Activated B cell treated with CpG ODN at 0.5 μM for 24 hours (primary cell): ENCODE measurements at regions of chr15 and their contacts with region 1.

Region 1: DNA sequence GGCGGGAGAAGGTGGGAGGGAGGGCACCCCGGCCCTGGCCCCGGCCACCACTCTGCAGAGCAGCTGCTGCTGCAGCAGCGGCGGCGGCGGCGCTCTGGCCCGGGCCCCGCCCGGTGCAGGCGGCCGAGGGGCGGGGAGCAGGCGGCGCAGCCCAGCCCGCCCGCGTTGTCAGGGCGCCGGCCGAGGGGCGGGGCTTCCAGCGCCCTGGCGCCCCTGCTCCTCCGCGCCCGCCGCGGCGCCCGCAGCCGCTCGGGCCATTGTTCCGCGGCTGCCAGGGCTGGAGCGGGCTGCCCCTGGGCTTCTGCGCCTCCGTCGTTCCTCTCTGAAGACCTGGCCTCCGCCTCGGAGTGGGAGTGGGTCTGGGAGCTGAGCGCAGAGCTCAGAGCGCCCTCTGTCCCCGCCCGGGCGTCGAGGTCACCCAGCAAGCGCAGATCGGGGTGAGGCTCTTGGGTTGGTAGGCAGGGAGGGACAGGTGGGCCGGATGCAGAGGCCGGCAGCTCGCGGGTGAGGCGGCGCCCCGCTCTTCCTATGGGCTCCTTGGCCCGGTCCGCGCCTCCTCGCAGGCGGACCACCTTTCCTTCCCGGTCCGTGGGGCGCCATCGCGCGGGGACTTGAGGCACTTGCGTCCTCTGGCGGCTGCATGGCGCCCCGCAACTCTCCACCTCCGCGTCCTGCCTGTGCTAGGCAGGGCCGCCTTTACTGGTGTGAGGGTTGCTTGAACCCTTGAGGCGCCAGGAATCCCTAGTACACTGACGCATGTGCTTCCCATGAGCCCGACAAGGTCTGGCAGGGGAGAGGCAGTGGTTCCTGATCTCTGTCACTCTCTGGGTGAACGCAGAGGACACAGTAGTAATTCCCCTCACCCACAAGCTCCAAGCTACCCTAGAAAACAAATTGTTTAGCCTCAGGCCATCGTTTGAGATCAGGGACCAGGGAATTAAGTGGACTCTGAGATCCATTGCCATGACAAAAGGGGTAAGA is at the start of gene LPCAT4:
- DNase-seq: peak; percentile 87
- ATAC-seq: peak; percentile 86
- H3K4me3 Mint-ChIP-seq: peak within 1 kb of the TSS; percentile 94
- H3K27ac Mint-ChIP-seq: peak within 1 kb of the TSS; percentile 95
- H3K4me1 Mint-ChIP-seq: peaks cover 45% of the 10 kb centered on the region
- H3K27me3 Mint-ChIP-seq: no peaks in the 10 kb centered on the region
- CTCF ChIP-seq: peak; percentile 78
- total RNA-seq, gene LPCAT4: 23.8 and 28.8 TPM in 2 replicates

Region 2: DNA sequence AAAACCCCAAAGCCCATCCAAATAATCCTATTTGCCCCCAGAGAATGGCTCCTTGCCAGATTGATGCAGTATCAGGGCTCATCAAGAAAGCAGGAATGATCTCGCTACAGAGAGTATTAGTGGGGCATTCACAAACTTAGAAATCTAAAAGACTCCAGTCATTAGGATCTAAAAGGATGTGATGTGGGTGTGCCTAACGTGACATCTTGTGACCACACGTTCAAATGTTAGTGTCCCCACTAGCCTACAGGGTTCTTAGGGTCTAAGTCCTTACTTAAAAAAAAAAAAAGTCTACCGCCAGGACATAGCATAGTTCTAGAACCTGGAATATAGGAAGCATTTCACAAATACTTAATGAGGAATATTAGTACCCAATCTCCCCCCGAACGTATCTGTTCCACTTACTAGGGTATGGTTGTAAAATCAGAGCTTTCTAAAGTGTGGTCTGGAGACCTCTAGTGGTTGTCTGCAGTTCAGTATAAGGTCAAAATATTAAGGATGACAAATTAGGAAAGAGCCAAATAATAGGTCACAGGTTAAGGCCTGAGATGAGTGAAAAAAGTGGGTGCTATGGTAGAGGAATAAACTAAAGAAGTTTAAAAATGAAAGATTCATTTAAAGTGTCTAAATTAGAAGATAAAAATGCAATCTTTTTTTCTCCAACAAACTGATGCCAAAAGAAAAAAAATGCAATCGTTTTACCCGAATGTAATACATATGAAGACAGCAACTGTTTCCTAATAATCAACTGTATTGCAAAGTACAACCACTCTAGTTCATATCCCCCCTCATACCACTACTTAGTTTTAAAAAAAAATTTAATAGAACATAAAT is 403.3 kb before region 1 on chr15:
- CTCF ChIA-PET with region 1: no interaction called
- POLR2A ChIA-PET with region 1: no interaction called
- intact Hi-C with region 1: no loop called
- DNase-seq: no peak
- ATAC-seq: no peak
- H3K4me3 Mint-ChIP-seq: no peak overlapping the region
- H3K27ac Mint-ChIP-seq: no peak overlapping the region
- H3K4me1 Mint-ChIP-seq: no peaks in the 10 kb centered on the region
- H3K27me3 Mint-ChIP-seq: no peaks in the 10 kb centered on the region
- CTCF ChIP-seq: no peak

Region 3: DNA sequence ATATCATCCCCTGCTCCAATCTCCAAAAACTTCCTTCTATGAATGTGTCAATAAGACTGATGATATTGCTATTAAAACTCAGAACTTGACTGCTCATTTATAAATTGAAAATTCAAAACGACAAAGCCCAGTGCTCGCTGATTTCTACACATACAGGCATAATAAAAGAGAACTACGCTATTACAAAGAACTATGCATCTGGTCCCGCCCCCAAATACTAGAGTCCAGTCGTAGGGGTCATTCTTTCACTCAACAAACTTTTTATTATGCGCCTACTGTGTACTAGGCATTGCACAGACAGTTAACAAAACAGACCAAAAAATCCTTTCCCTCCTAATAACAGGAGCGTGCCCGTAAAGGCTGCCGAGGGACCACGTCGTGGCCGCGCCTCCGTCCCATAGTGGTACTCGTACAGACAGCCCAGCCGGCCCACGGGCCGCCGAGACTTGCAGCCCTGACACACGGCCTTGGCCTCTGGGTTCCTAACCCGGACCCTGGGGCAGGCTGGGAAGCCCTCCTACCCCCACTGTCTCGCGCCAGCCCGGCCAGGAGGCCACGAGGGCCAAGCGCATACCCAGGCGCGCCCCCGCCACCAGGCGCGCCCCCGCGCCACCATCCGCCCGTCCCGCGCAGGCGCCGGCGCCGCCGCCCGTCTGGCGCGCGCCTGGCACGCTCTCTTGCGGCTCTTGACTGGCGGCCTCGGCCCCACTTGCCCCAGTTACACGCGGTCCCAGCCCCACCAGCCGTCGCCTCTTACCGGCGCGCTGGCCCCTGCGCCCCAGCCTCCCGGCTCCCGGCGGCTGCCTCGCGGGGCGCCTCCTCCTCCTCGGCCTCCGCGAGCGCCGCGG is 329.1 kb before region 1 on chr15:
- CTCF ChIA-PET with region 1: no interaction called
- POLR2A ChIA-PET with region 1: interaction called, 9 read pairs
- intact Hi-C with region 1: loop called (anchors 1 kb)
- DNase-seq: peak; percentile 71
- ATAC-seq: peak; percentile 79
- H3K4me3 Mint-ChIP-seq: peak overlapping the region; percentile 92
- H3K27ac Mint-ChIP-seq: peak overlapping the region; percentile 89
- H3K4me1 Mint-ChIP-seq: peaks cover 18% of the 10 kb centered on the region
- H3K27me3 Mint-ChIP-seq: no peaks in the 10 kb centered on the region
- CTCF ChIP-seq: no peak

Region 4: GRCh38 chr15:34109797-34110663 is 257.4 kb before region 1 on chr15:
- CTCF ChIA-PET with region 1: interaction called, 5 read pairs
- POLR2A ChIA-PET with region 1: no interaction called
- intact Hi-C with region 1: loop called (anchors 1 kb)
- DNase-seq: no peak
- ATAC-seq: no peak
- H3K4me3 Mint-ChIP-seq: no peak overlapping the region
- H3K27ac Mint-ChIP-seq: no peak overlapping the region
- H3K4me1 Mint-ChIP-seq: no peaks in the 10 kb centered on the region
- H3K27me3 Mint-ChIP-seq: no peaks in the 10 kb centered on the region
- CTCF ChIP-seq: peak; percentile 27

Region 5: GRCh38 chr15:34318277-34319079 is 48.9 kb before region 1 on chr15:
- CTCF ChIA-PET with region 1: interaction called, 6 read pairs
- POLR2A ChIA-PET with region 1: interaction called, 10 read pairs
- intact Hi-C with region 1: no loop called
- DNase-seq: no peak
- ATAC-seq: peak; percentile 83
- H3K4me3 Mint-ChIP-seq: peak overlapping the region; percentile 94
- H3K27ac Mint-ChIP-seq: peak overlapping the region; percentile 91
- H3K4me1 Mint-ChIP-seq: peaks cover 74% of the 10 kb centered on the region
- H3K27me3 Mint-ChIP-seq: no peaks in the 10 kb centered on the region
- CTCF ChIP-seq: no peak

Region 6: DNA sequence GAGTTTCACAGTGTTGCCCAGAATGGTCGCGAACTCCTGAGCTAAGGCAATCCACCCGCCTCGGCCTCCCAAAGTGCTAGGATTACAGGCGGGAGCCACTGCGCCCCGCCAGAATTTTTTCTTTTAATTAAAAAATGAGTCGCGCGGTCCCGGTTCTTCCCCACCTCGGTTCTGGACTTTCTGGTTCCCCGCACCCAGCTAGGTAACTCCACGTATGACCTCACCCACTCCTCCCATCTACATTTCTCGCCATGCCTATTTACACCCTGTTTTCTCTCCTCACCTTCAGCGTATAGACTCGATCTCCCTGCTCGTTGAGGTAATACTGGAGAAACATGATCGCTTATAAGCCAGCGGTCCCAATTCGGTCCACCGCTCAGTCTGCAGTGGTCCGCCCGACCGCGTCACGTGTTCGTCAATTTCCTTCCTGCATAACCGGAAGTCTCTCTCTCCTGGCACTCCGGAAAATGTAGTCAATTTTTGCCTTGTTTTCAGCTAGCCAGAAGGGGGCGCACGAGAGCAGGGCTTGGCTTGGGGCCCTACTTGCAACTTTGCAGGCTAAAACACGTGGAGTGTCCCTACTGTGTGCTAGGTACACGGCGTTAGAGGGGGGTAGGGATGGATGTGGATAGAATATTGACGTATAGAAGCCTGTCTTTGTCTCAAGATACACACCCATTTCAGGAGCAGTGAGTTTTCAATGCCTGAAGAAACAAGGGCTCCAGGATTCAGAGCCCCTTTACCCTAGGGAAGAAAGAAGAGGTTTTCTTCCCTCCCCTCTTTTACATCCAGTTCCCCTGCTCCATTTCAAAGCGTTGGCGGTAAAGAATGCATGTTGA is 24.4 kb before region 1 on chr15 and contains the starts of genes NOP10 and NUTM1:
- CTCF ChIA-PET with region 1: interaction called, 32 read pairs
- POLR2A ChIA-PET with region 1: interaction called, 64 read pairs
- intact Hi-C with region 1: loop called (anchors 1 kb)
- DNase-seq: peak; percentile 89
- ATAC-seq: peak; percentile 90
- H3K4me3 Mint-ChIP-seq: no peak within 1 kb of the TSS
- H3K27ac Mint-ChIP-seq: peak within 1 kb of the TSS; percentile 74
- H3K4me1 Mint-ChIP-seq: peaks cover 25% of the 10 kb centered on the region
- H3K27me3 Mint-ChIP-seq: no peaks in the 10 kb centered on the region
- CTCF ChIP-seq: peak; percentile 57
- total RNA-seq, gene NOP10: 116 and 130 TPM in 2 replicates
- total RNA-seq, gene NUTM1: not detected in 2 replicates

Region 7: GRCh38 chr15:34987985-34988873 is 620.8 kb after region 1 on chr15 and contains the start of gene ZNF770:
- CTCF ChIA-PET with region 1: no interaction called
- POLR2A ChIA-PET with region 1: interaction called, 7 read pairs
- intact Hi-C with region 1: loop called (anchors 10 kb)
- DNase-seq: peak; percentile 92
- ATAC-seq: peak; percentile 85
- H3K4me3 Mint-ChIP-seq: peak within 1 kb of the TSS; percentile 98
- H3K27ac Mint-ChIP-seq: peak within 1 kb of the TSS; percentile 98
- H3K4me1 Mint-ChIP-seq: peaks cover 37% of the 10 kb centered on the region
- H3K27me3 Mint-ChIP-seq: no peaks in the 10 kb centered on the region
- CTCF ChIP-seq: no peak
- total RNA-seq, gene ZNF770: 46.8 TPM in 2 replicates